HCT116 (cell line): ENCODE measurements at regions of chrX and their contacts with region 1.

Region 1: GRCh38 chrX:46912098-46912602 is at the start of gene JADE3:
- DNase-seq: peak; percentile 29
- ATAC-seq: peak; percentile 88
- H3K4me3 ChIP-seq: peak within 1 kb of the TSS; percentile 54 to 63
- H3K27ac ChIP-seq: peak within 1 kb of the TSS; percentile 71
- H3K4me1 ChIP-seq: peaks cover 0 to 13% of the 10 kb centered on the region in 2 experiments; a peak in 2 of 4 replicates
- H3K27me3 ChIP-seq: no peaks in the 10 kb centered on the region
- CTCF ChIP-seq: no peak
- POLR2A ChIP-seq: no peak
- RAD21 ChIP-seq: no peak
- total RNA-seq, gene JADE3: 14.3 TPM

Region 2: DNA sequence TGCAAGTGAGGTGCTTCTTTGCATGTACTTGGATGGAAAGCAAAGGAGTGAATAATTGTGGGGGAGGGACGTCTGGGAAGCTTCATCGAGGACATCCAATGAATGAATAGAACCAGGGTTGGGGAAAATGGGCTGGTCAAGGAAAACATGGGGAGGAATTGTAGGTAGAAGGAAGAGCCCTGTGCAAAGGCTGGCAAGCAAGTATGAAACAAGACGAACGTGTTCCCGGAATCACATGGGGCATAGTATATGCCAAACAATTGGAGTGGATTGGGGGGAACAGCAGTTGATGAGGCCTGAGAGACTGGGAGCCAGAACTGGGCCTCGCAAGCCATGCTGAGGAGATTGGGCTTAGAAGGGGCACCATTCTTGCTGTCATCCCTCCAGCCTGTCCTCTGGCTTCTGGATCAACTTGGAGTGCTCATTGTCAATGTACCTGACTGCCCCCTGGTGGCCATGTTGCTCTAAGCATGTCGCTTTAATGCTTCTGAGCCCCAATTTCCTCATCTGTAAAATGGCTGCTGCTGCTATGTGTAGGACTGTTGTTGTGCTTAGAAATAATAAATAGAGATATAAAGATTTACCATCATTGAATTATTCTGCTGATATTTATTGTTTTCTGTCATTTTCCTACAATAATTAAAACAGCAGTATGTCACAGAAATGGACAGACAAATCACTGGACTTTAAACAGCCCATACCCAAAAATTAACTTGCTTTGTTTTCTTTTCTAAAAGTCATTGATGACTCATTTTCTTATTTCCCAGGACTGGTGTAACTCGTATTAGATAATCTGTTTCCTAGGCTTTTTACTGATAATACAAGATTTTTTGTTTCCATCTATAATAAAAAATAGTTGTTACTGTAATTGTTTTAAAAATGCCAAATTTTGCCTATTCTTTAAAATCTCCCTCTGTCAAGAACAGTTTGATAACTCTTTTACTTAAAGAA is 66.5 kb after region 1 on chrX:
- CTCF ChIA-PET with region 1: no interaction called
- POLR2A ChIA-PET with region 1: no interaction called
- RAD21 ChIA-PET with region 1: no interaction called
- intact Hi-C with region 1: loop called (anchors 2 kb)
- DNase-seq: peak; percentile 68
- ATAC-seq: peak; percentile 94
- H3K4me3 ChIP-seq: peak overlapping the region in 1 of 2 experiments; percentile 37; a peak in 1 of 4 replicates
- H3K27ac ChIP-seq: peak overlapping the region; percentile 76; the same call in 1 of the 2 replicates
- H3K4me1 ChIP-seq: peaks cover 7 to 16% of the 10 kb centered on the region in 2 experiments
- H3K27me3 ChIP-seq: no peaks in the 10 kb centered on the region
- CTCF ChIP-seq: peak; percentile 50 to 63 (median 59); a peak in 5 of 6 replicates
- POLR2A ChIP-seq: no peak
- RAD21 ChIP-seq: peak; percentile 48

Region 3: GRCh38 chrX:47129157-47129898 is 217.2 kb after region 1 on chrX:
- CTCF ChIA-PET with region 1: no interaction called
- POLR2A ChIA-PET with region 1: no interaction called
- RAD21 ChIA-PET with region 1: no interaction called
- intact Hi-C with region 1: no loop called
- DNase-seq: peak; percentile 88
- ATAC-seq: peak; percentile 99
- H3K4me3 ChIP-seq: peak overlapping the region; percentile 59 to 65
- H3K27ac ChIP-seq: peak overlapping the region; percentile 47
- H3K4me1 ChIP-seq: 0 out of 4 replicates have a peak, but pooled peaks cover 0 to 2% of the 10 kb centered on the region in 2 experiments
- H3K27me3 ChIP-seq: no peaks in the 10 kb centered on the region
- CTCF ChIP-seq: no peak
- POLR2A ChIP-seq: no peak
- RAD21 ChIP-seq: no peak